PC-3 (cell line): ENCODE measurements at regions of chr2 and their contacts with region 1.

Region 1: DNA sequence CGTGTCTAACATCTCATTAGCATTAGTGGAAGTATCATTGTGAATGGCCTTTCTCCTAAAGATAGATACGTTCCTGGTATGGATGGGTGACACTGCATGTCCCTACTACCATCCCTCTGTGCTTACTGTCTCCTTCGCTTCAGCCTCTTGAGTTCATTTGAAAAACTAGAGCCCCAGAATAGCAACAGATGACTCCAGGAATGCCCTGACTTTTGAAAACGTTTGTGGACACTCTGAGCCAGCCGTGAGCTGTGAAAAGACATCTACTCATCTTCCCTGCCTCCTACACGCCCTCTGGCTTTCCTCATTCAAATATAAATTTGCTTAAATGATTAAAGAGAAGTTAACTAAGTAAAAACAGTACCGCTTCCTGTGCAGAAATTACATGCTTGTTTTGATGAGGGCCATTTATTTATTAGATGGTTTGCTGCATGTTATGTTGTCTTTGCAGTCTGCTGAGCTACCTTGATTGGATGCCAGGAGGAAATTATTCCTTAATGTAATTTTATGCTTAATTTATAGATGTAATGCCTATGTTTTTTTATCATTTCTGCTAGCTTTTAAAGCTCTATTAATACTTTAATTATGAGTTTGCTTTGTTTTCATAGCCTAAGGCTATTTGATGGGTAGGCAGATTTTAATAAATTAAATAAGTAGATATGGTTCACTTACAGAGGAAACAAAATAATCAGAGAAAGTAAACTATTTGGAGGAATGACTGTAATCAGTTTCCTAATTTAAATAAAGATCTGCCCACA is 32.1 kb upstream of the MYO3B start:
- DNase-seq: no peak
- ATAC-seq: peak; percentile 47
- H3K4me3 ChIP-seq: no peak overlapping the region
- H3K27ac ChIP-seq: no peak overlapping the region
- H3K4me1 ChIP-seq: peaks cover 33% of the 10 kb centered on the region
- H3K27me3 ChIP-seq: no peaks in the 10 kb centered on the region
- CTCF ChIP-seq: no peak

Region 2: GRCh38 chr2:170122883-170123584 is 22.8 kb before region 1 on chr2:
- CTCF ChIA-PET with region 1: no interaction called
- POLR2A ChIA-PET with region 1: no interaction called
- intact Hi-C with region 1: loop called (anchors 1 kb)
- DNase-seq: peak; percentile 96
- ATAC-seq: peak; percentile 90
- H3K4me3 ChIP-seq: no peak overlapping the region
- H3K27ac ChIP-seq: peak overlapping the region; percentile 73
- H3K4me1 ChIP-seq: peaks cover 68% of the 10 kb centered on the region
- H3K27me3 ChIP-seq: no peaks in the 10 kb centered on the region
- CTCF ChIP-seq: no peak